ENCODE measurements at regions of chr14 and their contacts with region 1.

Region 1: DNA sequence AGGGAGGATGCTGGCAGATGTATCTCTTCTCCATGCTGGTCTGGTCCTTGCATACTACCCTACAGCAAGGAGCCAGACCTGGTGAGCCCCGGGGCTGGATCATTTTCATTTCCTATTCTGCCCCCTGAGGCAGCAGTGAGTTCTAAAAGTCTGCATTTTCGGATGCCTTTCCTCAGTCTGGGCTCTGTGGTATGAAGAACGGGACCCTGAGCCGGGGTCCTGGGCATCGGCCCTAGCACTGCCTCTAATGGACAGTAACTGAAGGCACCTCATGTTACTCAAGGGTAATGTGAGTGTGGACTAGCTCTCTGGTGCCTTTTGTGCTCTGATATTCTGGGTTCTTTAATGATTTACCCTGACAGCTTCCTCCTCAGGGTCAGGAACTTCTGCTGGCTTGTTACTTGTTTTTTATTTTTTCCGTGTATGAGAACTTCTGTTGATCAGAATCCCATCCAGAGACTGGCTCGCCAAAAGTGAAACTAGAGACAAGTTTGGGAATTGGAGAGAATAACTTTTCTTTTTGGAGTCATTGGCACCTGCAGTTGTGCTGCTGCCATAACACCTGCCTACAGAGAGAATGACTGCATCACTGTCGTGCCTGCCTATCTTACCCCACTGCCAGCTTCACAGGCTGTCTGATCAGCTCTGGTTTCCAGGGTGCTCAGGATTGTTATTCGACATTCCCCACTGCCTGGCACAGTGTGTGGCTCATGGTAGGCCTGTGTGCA is 62.3 kb downstream of the SUSD6 start:
- DNase-seq: no peak
- ATAC-seq: peak; percentile 48
- H3K4me3 Mint-ChIP-seq: peak overlapping the region; percentile 33
- H3K27ac Mint-ChIP-seq: peak overlapping the region; percentile 86
- H3K4me1 Mint-ChIP-seq: peaks cover 82% of the 10 kb centered on the region
- H3K27me3 Mint-ChIP-seq: no peaks in the 10 kb centered on the region
- CTCF ChIP-seq: no peak

Region 2: GRCh38 chr14:69685716-69686115 is 12.0 kb after region 1 on chr14:
- CTCF ChIA-PET with region 1: no interaction called
- POLR2A ChIA-PET with region 1: interaction called, 11 read pairs
- intact Hi-C with region 1: loop called (anchors 2 kb)
- DNase-seq: no peak
- ATAC-seq: no peak
- H3K4me3 Mint-ChIP-seq: peak overlapping the region; percentile 6
- H3K27ac Mint-ChIP-seq: peak overlapping the region; percentile 81
- H3K4me1 Mint-ChIP-seq: peaks cover 80% of the 10 kb centered on the region
- H3K27me3 Mint-ChIP-seq: no peaks in the 10 kb centered on the region
- CTCF ChIP-seq: no peak

Region 3: GRCh38 chr14:69695322-69696203 is 21.8 kb after region 1 on chr14:
- CTCF ChIA-PET with region 1: no interaction called
- POLR2A ChIA-PET with region 1: interaction called, 3 read pairs
- intact Hi-C with region 1: loop called (anchors 1 kb)
- DNase-seq: no peak
- ATAC-seq: peak; percentile 45
- H3K4me3 Mint-ChIP-seq: peak overlapping the region; percentile 30
- H3K27ac Mint-ChIP-seq: peak overlapping the region; percentile 85
- H3K4me1 Mint-ChIP-seq: peaks cover 90% of the 10 kb centered on the region
- H3K27me3 Mint-ChIP-seq: no peaks in the 10 kb centered on the region
- CTCF ChIP-seq: no peak

Region 4: GRCh38 chr14:69708586-69709174 is 34.9 kb after region 1 on chr14:
- CTCF ChIA-PET with region 1: no interaction called
- POLR2A ChIA-PET with region 1: interaction called, 5 read pairs
- intact Hi-C with region 1: loop called (anchors 5 kb)
- DNase-seq: no peak
- ATAC-seq: peak; percentile 66
- H3K4me3 Mint-ChIP-seq: no peak overlapping the region
- H3K27ac Mint-ChIP-seq: peak overlapping the region; percentile 63
- H3K4me1 Mint-ChIP-seq: peaks cover 55% of the 10 kb centered on the region
- H3K27me3 Mint-ChIP-seq: no peaks in the 10 kb centered on the region
- CTCF ChIP-seq: no peak